CD4-positive, alpha-beta T cell (primary cell): ENCODE measurements at regions of chr17 and their contacts with region 1.

Region 1: GRCh38 chr17:2244545-2245525 is 58.8 kb downstream of the SMG6 start:
- DNase-seq: peak; percentile 73 to 91 (median 82)
- ATAC-seq: peak; percentile 96
- H3K4me3 ChIP-seq: no peak overlapping the region
- H3K4me3 Mint-ChIP-seq: no peak overlapping the region
- H3K27ac ChIP-seq: no peak overlapping the region
- H3K27ac Mint-ChIP-seq: peak overlapping the region; percentile 57
- H3K4me1 ChIP-seq: peaks cover 11% of the 10 kb centered on the region
- H3K4me1 Mint-ChIP-seq: peaks cover 40% of the 10 kb centered on the region
- H3K27me3 ChIP-seq: no peaks in the 10 kb centered on the region
- H3K27me3 Mint-ChIP-seq: no peaks in the 10 kb centered on the region
- CTCF ChIP-seq: peak; percentile 94

Region 2: DNA sequence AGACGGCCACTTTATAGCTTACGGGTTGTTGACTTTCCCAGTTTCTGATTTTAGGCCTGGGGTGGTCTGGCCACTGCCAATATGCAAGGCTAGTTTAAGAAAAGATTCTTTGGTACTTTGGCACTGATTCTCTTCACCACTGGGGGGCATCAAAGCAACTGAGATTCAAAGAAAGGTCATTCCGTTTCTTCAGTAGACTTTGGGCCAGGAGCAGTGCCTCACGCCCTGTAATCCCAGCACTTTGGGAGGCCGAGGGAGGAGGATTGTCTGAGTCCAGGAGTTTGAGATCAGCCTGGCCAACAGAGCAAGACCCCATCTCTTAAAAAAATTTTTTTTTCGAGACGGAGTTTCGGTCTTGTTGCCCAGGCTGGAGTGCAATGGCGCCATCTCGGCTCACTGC is 362.0 kb before region 1 on chr17:
- CTCF ChIA-PET with region 1: interaction called, 3 read pairs
- POLR2A ChIA-PET with region 1: no interaction called
- intact Hi-C with region 1: loop called in 1 of 2 experiments (anchors 5 kb)
- DNase-seq: peak in 6 of 14 experiments; percentile 5 to 50 (median 45)
- ATAC-seq: no peak
- H3K4me3 ChIP-seq: no peak overlapping the region
- H3K4me3 Mint-ChIP-seq: no peak overlapping the region
- H3K27ac ChIP-seq: no peak overlapping the region
- H3K27ac Mint-ChIP-seq: no peak overlapping the region
- H3K4me1 ChIP-seq: no peaks in the 10 kb centered on the region
- H3K4me1 Mint-ChIP-seq: no peaks in the 10 kb centered on the region
- H3K27me3 ChIP-seq: no peaks in the 10 kb centered on the region
- H3K27me3 Mint-ChIP-seq: no peaks in the 10 kb centered on the region
- CTCF ChIP-seq: peak; percentile 42

Region 3: GRCh38 chr17:2192367-2193057 is 52.3 kb before region 1 on chr17:
- CTCF ChIA-PET with region 1: interaction called, 3 read pairs
- POLR2A ChIA-PET with region 1: interaction called, 3 read pairs
- intact Hi-C with region 1: loop called in 1 of 2 experiments (anchors 10 kb)
- DNase-seq: peak in 13 of 14 experiments; percentile 12 to 73 (median 52)
- ATAC-seq: peak; percentile 79
- H3K4me3 ChIP-seq: no peak overlapping the region
- H3K4me3 Mint-ChIP-seq: peak overlapping the region; percentile 39
- H3K27ac ChIP-seq: no peak overlapping the region
- H3K27ac Mint-ChIP-seq: peak overlapping the region; percentile 70
- H3K4me1 ChIP-seq: peaks cover 25% of the 10 kb centered on the region
- H3K4me1 Mint-ChIP-seq: peaks cover 58% of the 10 kb centered on the region
- H3K27me3 ChIP-seq: no peaks in the 10 kb centered on the region
- H3K27me3 Mint-ChIP-seq: no peaks in the 10 kb centered on the region
- CTCF ChIP-seq: no peak

Region 4: DNA sequence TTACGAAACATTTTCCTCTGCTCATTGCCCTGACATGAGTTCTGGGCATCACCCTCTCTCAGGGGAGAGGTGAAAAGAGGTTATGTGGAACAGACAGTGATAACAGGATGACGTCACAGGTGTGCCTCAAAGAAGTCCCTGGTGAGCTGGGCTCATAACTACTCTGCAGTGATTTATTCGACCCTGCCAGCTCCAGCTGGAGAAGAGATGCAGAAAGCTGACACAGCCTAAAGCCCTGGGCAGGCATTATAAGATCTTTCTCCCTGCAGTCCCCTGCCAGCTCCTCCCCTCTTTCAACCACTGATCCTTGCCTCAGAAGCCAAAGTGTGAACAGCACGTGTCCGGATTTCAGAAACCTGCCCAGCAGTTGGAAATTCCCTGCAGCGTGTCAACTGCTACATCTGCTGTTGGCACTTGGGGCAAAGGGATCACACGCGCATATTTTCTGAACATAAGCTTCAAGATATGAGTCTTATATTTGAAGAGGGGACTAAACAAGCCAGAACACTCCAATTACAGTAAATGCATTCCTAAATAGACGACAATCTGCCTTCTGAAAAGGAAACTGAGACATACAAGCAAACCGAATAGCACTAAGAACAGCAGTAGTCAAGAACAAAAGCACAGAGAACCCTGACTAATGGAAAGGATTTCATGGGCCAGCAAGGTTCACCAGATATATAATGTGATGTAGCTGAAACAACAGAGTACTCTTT is 21.8 kb before region 1 on chr17:
- CTCF ChIA-PET with region 1: interaction called, 23 read pairs
- POLR2A ChIA-PET with region 1: no interaction called
- intact Hi-C with region 1: no loop called
- DNase-seq: peak in 13 of 14 experiments; percentile 18 to 90 (median 37)
- ATAC-seq: peak; percentile 85
- H3K4me3 ChIP-seq: no peak overlapping the region
- H3K4me3 Mint-ChIP-seq: peak overlapping the region; percentile 2
- H3K27ac ChIP-seq: peak overlapping the region in 1 of 2 donors; percentile 66
- H3K27ac Mint-ChIP-seq: peak overlapping the region; percentile 60
- H3K4me1 ChIP-seq: peaks cover 18% of the 10 kb centered on the region
- H3K4me1 Mint-ChIP-seq: peaks cover 44% of the 10 kb centered on the region
- H3K27me3 ChIP-seq: no peaks in the 10 kb centered on the region
- H3K27me3 Mint-ChIP-seq: no peaks in the 10 kb centered on the region
- CTCF ChIP-seq: no peak

Region 5: GRCh38 chr17:2266045-2266864 is 21.4 kb after region 1 on chr17:
- CTCF ChIA-PET with region 1: interaction called, 53 read pairs
- POLR2A ChIA-PET with region 1: interaction called, 77 read pairs
- intact Hi-C with region 1: loop called in 1 of 2 experiments (anchors 2 kb)
- DNase-seq: peak; percentile 55 to 96 (median 71)
- ATAC-seq: peak; percentile 80
- H3K4me3 ChIP-seq: peak overlapping the region; percentile 36
- H3K4me3 Mint-ChIP-seq: peak overlapping the region; percentile 67
- H3K27ac ChIP-seq: peak overlapping the region; percentile 83 to 84
- H3K27ac Mint-ChIP-seq: peak overlapping the region; percentile 98
- H3K4me1 ChIP-seq: peaks cover 87% of the 10 kb centered on the region
- H3K4me1 Mint-ChIP-seq: peaks cover 85% of the 10 kb centered on the region
- H3K27me3 ChIP-seq: no peaks in the 10 kb centered on the region
- H3K27me3 Mint-ChIP-seq: no peaks in the 10 kb centered on the region
- CTCF ChIP-seq: no peak

Region 6: GRCh38 chr17:2613089-2613808 is 368.4 kb after region 1 on chr17:
- CTCF ChIA-PET with region 1: no interaction called
- POLR2A ChIA-PET with region 1: no interaction called
- intact Hi-C with region 1: no loop called
- DNase-seq: no peak
- ATAC-seq: no peak
- H3K4me3 ChIP-seq: no peak overlapping the region
- H3K4me3 Mint-ChIP-seq: no peak overlapping the region
- H3K27ac ChIP-seq: no peak overlapping the region
- H3K27ac Mint-ChIP-seq: no peak overlapping the region
- H3K4me1 ChIP-seq: peaks cover 52% of the 10 kb centered on the region
- H3K4me1 Mint-ChIP-seq: peaks cover 77% of the 10 kb centered on the region
- H3K27me3 ChIP-seq: no peaks in the 10 kb centered on the region
- H3K27me3 Mint-ChIP-seq: no peaks in the 10 kb centered on the region
- CTCF ChIP-seq: no peak